Activated CD8-positive, alpha-beta T cell treated with anti-CD3 and anti-CD28 coated beads, Interleukin-2, amount 10 ng/mL, durations not matched to agents 7 days and 5 days (primary cell): ENCODE measurements at regions of chr11 and their contacts with region 1.

Region 1: GRCh38 chr11:65662799-65663638 is at the start of gene RELA:
- DNase-seq: peak; percentile 91
- ATAC-seq: peak; percentile 84
- H3K4me3 Mint-ChIP-seq: peak within 1 kb of the TSS; percentile 81
- H3K27ac Mint-ChIP-seq: peak within 1 kb of the TSS; percentile 91
- H3K4me1 Mint-ChIP-seq: peaks cover 30% of the 10 kb centered on the region
- H3K27me3 Mint-ChIP-seq: no peaks in the 10 kb centered on the region
- total RNA-seq, gene RELA: 72.5 to 82.4 TPM

Region 2: DNA sequence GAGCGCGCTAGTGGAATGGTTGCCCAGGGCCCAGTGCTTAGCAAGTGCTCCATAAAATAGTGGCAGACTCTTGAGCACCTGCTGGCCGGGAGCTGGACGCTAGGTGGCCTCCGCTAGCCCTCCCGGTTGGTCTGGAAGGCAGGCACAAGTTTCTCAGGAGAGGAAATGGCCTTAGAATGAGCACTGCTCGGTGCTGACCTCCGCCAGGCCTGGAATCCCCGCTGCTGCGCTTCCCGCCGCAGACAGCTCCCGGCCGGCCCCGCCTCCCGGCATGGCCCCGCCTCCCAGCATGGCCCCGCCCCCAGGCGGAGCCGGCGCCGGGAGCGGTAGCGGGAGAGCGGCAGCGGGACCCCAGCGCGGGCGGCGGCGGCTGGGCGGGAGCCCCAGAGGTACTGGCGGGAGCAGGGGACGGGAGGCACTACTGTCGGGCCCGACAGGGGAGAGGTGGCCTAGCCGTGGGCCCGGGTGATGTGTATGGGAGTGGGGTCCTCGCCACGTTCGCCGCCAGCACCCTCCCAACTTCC is 25.2 kb before region 1 on chr11 and contains the start of gene SIPA1:
- CTCF ChIA-PET with region 1: interaction called, 5 read pairs
- POLR2A ChIA-PET with region 1: interaction called, 11 read pairs
- DNase-seq: peak; percentile 72
- ATAC-seq: peak; percentile 55
- H3K4me3 Mint-ChIP-seq: peak within 1 kb of the TSS; percentile 98
- H3K27ac Mint-ChIP-seq: peak within 1 kb of the TSS; percentile 98
- H3K4me1 Mint-ChIP-seq: peaks cover 68% of the 10 kb centered on the region
- H3K27me3 Mint-ChIP-seq: no peaks in the 10 kb centered on the region
- total RNA-seq, gene SIPA1: 245 to 274 TPM

Region 3: DNA sequence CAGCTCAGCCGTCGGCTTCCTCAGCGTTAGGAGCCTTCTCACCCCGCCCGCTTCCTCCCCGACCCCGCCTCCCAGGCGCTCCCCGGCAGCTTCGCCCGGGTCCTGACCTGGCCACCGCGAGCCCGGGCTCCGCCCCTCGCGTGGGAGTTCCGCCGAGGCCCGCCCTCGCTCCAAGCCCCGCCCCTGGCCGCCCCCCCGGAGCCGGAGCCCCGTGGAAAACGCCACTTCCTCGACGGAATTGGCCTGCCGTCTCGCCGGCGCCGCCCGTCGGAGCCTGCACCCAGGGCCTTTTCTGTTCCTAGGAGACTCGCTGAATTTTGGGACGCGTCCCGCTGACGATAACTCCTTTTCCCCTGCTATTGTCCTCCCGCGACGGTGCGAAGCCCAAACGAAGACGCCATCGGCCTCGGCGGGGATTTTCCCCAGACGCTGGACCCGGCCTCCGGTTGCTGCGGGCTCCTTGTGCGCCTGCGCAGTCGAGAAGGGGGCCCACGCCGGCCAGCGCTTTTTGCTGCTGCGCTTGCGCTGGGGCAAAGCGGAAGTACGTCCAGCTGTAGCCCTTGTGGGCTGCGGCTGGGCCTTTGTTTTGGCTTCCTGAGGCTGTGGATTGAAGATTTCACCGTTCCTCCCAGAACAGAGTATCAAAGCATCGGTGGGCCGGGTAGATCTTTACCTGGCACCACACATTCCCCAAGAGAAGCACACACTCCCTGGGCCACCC is 10.3 kb before region 1 on chr11:
- CTCF ChIA-PET with region 1: interaction called, 10 read pairs
- POLR2A ChIA-PET with region 1: interaction called, 27 read pairs
- DNase-seq: peak; percentile 96
- ATAC-seq: peak; percentile 90
- H3K4me3 Mint-ChIP-seq: peak overlapping the region; percentile 77
- H3K27ac Mint-ChIP-seq: peak overlapping the region; percentile 90
- H3K4me1 Mint-ChIP-seq: peaks cover 48% of the 10 kb centered on the region
- H3K27me3 Mint-ChIP-seq: no peaks in the 10 kb centered on the region